ENCODE measurements at regions of chr6 and their contacts with region 1.

Region 1: GRCh38 chr6:33711140-33712129 is at the start of gene UQCC2:
- DNase-seq: peak; percentile 93
- ATAC-seq: peak; percentile 88
- H3K4me3 ChIP-seq: peak within 1 kb of the TSS; percentile 69 to 80
- H3K27ac ChIP-seq: peak within 1 kb of the TSS; percentile 93
- H3K4me1 ChIP-seq: peaks cover 20 to 36% of the 10 kb centered on the region in 2 experiments
- H3K27me3 ChIP-seq: no peaks in the 10 kb centered on the region
- CTCF ChIP-seq: peak; percentile 45 to 69 (median 57); a peak in 4 of 6 replicates
- POLR2A ChIP-seq: peak; percentile 67
- RAD21 ChIP-seq: peak; percentile 87
- total RNA-seq, gene UQCC2: 95.1 TPM

Region 2: GRCh38 chr6:33683051-33683571 is 28.3 kb before region 1 on chr6:
- CTCF ChIA-PET with region 1: no interaction called
- POLR2A ChIA-PET with region 1: no interaction called
- RAD21 ChIA-PET with region 1: no interaction called
- intact Hi-C with region 1: no loop called
- DNase-seq: no peak
- ATAC-seq: no peak
- H3K4me3 ChIP-seq: no peak overlapping the region
- H3K27ac ChIP-seq: no peak overlapping the region
- H3K4me1 ChIP-seq: no peaks in the 10 kb centered on the region
- H3K27me3 ChIP-seq: no peaks in the 10 kb centered on the region
- CTCF ChIP-seq: no peak
- POLR2A ChIP-seq: no peak
- RAD21 ChIP-seq: no peak

Region 3: GRCh38 chr6:33700391-33701050 is 10.9 kb before region 1 on chr6:
- CTCF ChIA-PET with region 1: interaction called, 12 read pairs
- POLR2A ChIA-PET with region 1: interaction called, 4 read pairs
- RAD21 ChIA-PET with region 1: no interaction called
- intact Hi-C with region 1: no loop called
- DNase-seq: peak; percentile 65
- ATAC-seq: peak; percentile 88
- H3K4me3 ChIP-seq: no peak overlapping the region
- H3K27ac ChIP-seq: no peak overlapping the region
- H3K4me1 ChIP-seq: peaks cover 4 to 6% of the 10 kb centered on the region in 2 experiments; a peak in 3 of 4 replicates
- H3K27me3 ChIP-seq: no peaks in the 10 kb centered on the region
- CTCF ChIP-seq: peak; percentile 79 to 89 (median 82)
- POLR2A ChIP-seq: no peak
- RAD21 ChIP-seq: peak; percentile 77

Region 4: GRCh38 chr6:33723371-33724085 is 12.1 kb after region 1 on chr6:
- CTCF ChIA-PET with region 1: interaction called, 12 read pairs
- POLR2A ChIA-PET with region 1: no interaction called
- RAD21 ChIA-PET with region 1: no interaction called
- intact Hi-C with region 1: no loop called
- DNase-seq: no peak
- ATAC-seq: no peak
- H3K4me3 ChIP-seq: no peak overlapping the region
- H3K27ac ChIP-seq: no peak overlapping the region
- H3K4me1 ChIP-seq: no peaks in the 10 kb centered on the region
- H3K27me3 ChIP-seq: peaks cover 30% of the 10 kb centered on the region
- CTCF ChIP-seq: no peak
- POLR2A ChIP-seq: no peak
- RAD21 ChIP-seq: no peak

Region 5: DNA sequence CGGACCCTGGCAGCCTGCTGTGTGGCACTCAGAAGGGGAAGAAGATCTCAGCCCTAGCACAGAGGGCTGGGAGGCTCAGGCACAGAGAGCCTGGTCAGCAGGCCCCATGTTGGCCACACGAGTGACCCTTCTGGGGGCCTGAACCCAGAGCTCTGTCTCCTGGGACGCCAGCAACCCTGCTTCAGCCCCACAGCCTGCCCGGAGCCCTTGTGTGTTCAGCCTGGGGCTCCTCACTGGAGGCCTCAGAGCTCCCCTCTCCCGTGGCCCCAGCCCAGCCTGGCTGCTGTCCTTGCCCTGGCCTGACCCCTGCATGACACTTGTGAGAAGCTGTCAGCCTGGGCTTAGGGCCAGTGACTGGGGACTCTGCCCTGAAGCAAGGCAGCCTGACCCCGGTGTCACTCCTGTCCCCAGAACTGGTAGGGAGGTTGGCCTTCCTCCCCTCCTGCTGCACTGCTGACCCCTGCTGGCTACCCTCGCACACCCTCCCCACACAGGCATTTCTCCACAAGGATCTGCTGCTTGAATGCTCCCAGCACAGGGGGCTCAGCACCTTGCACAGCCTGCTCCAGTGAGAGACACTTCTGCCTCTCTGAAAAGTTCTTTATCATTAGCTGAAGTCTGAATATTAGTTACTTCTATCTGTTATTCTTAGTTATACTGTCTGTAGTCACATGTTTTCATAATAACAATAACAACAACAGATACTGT is 50.6 kb after region 1 on chr6:
- CTCF ChIA-PET with region 1: interaction called, 7 read pairs
- POLR2A ChIA-PET with region 1: no interaction called
- RAD21 ChIA-PET with region 1: no interaction called
- intact Hi-C with region 1: loop called (anchors 1 kb)
- DNase-seq: no peak
- ATAC-seq: peak; percentile 87
- H3K4me3 ChIP-seq: no peak overlapping the region
- H3K27ac ChIP-seq: no peak overlapping the region; the same call in 1 of the 2 replicates
- H3K4me1 ChIP-seq: peaks cover 6 to 19% of the 10 kb centered on the region in 2 experiments; a peak in 3 of 4 replicates
- H3K27me3 ChIP-seq: no peaks in the 10 kb centered on the region
- CTCF ChIP-seq: peak; percentile 58 to 88 (median 70)
- POLR2A ChIP-seq: no peak
- RAD21 ChIP-seq: peak; percentile 89